ENCODE measurements at regions of chr5 and their contacts with region 1.

Region 1: DNA sequence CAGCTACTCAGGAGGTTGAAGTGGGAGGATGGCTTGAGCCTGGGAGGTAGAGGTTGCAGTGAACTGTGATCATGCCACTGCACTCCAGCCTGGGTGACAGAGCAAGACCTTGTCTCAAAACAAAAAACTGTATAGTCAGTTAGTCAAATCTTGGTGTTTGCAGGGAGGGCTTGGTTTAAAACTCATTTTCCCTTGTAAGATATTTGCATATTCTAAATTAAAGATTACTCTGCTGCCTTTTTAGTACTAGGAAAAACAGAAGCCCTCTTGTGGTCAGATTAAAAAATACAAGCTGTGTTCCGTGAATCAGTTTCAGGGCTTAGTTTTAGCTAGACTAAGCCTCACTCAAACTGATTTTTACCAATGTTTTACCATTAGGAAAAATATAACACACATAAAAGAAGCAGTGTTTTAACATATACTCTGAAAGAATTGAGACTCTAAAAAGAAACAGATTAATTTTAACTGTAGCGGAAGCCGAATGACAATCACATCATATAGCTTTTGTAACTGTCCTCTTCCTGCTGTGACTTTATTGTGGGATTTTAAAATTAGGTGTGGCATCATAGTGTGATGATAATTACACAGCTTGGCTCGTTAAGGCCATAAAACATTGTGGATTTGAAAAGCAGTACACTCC is 84.9 kb upstream of the BASP1 start:
- DNase-seq: no peak
- H3K4me3 Mint-ChIP-seq: no peak overlapping the region
- H3K27ac Mint-ChIP-seq: no peak overlapping the region
- H3K4me1 Mint-ChIP-seq: peaks cover 27% of the 10 kb centered on the region
- H3K27me3 Mint-ChIP-seq: no peaks in the 10 kb centered on the region
- CTCF ChIP-seq: peak; percentile 44

Region 2: DNA sequence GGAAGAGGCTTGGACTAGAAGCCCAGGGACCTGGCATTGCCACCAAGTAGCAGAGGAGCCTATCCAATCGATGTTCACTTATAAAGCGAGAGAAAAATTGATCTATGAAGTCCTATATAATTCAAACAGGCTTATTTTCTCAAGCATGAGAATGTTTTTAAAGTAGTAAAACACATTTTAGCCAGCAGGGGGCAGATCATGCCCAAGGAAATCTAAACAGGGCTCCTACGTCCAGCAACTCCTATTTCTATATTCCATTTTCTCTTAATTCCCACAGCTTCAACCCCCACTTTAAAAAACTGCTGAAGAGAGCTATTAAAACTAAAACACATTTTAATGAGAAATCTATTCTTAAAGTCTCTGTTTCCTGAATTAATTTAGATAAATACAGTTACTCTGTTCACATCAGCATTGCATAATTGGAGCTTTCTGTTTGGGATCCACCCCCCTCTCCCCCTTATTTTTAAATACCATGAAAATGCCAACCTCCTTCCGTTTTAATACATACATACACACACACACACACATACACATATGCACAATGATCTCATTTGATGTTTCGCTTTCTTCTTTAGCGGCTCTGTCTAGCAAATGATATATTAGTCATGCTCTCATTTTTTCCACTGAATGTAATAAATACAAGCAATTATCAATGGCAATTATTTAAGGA is 341.4 kb before region 1 on chr5:
- CTCF ChIA-PET with region 1: interaction called, 5 read pairs
- intact Hi-C with region 1: loop called (anchors 2 kb)
- DNase-seq: peak; percentile 50
- H3K4me3 Mint-ChIP-seq: no peak overlapping the region
- H3K27ac Mint-ChIP-seq: no peak overlapping the region
- H3K4me1 Mint-ChIP-seq: peaks cover 31% of the 10 kb centered on the region
- H3K27me3 Mint-ChIP-seq: no peaks in the 10 kb centered on the region
- CTCF ChIP-seq: peak; percentile 64

Region 3: GRCh38 chr5:16992006-16992405 is 140.6 kb before region 1 on chr5:
- CTCF ChIA-PET with region 1: interaction called, 7 read pairs
- intact Hi-C with region 1: loop called (anchors 5 kb)
- DNase-seq: peak; percentile 17
- H3K4me3 Mint-ChIP-seq: no peak overlapping the region
- H3K27ac Mint-ChIP-seq: peak overlapping the region; percentile 80
- H3K4me1 Mint-ChIP-seq: peaks cover 37% of the 10 kb centered on the region
- H3K27me3 Mint-ChIP-seq: no peaks in the 10 kb centered on the region
- CTCF ChIP-seq: no peak

Measured in Calu3 (cell line).